ENCODE measurements at regions of chr3 and their contacts with region 1.

Region 1: GRCh38 chr3:185824476-185825378 is at the start of gene IGF2BP2:
- DNase-seq: peak; percentile 83 to 87 (median 84)
- ATAC-seq: peak; percentile 69
- H3K4me3 ChIP-seq: peak within 1 kb of the TSS; percentile 91
- H3K27ac ChIP-seq: peak within 1 kb of the TSS; percentile 93
- H3K4me1 ChIP-seq: peaks cover 9 to 21% of the 10 kb centered on the region in 2 experiments; a peak in 4 of 5 replicates
- H3K27me3 ChIP-seq: no peaks in the 10 kb centered on the region
- CTCF ChIP-seq: peak in 2 of 3 experiments; percentile 16 to 18; a peak in 2 of 6 replicates
- EP300 ChIP-seq: no peak
- POLR2A ChIP-seq: peak; percentile 71
- RAD21 ChIP-seq: peak in 1 of 2 experiments; percentile 15; a peak in 3 of 4 replicates
- polyA plus RNA-seq, gene IGF2BP2: 3.2 to 3.5 TPM

Region 2: GRCh38 chr3:185764163-185764979 is 60.4 kb before region 1 on chr3:
- CTCF ChIA-PET with region 1: no interaction called
- POLR2A ChIA-PET with region 1: no interaction called
- in situ Hi-C with region 1: no loop called
- intact Hi-C with region 1: loop called (anchors 5 kb)
- DNase-seq: no peak
- ATAC-seq: peak; percentile 23
- H3K4me3 ChIP-seq: no peak overlapping the region
- H3K27ac ChIP-seq: no peak overlapping the region
- H3K4me1 ChIP-seq: peaks cover 4 to 34% of the 10 kb centered on the region in 2 experiments; a peak in 4 of 5 replicates
- H3K27me3 ChIP-seq: no peaks in the 10 kb centered on the region; a peak in 1 of 5 replicates
- CTCF ChIP-seq: no peak
- EP300 ChIP-seq: no peak
- POLR2A ChIP-seq: no peak
- RAD21 ChIP-seq: no peak

Region 3: GRCh38 chr3:185807445-185808068 is 17.2 kb before region 1 on chr3:
- CTCF ChIA-PET with region 1: no interaction called
- POLR2A ChIA-PET with region 1: interaction called, 17 read pairs
- in situ Hi-C with region 1: no loop called
- intact Hi-C with region 1: no loop called
- DNase-seq: peak in 2 of 4 experiments; percentile 23 to 67
- ATAC-seq: peak; percentile 17
- H3K4me3 ChIP-seq: no peak overlapping the region
- H3K27ac ChIP-seq: no peak overlapping the region
- H3K4me1 ChIP-seq: peaks cover 0 to 19% of the 10 kb centered on the region in 2 experiments; a peak in 4 of 5 replicates
- H3K27me3 ChIP-seq: no peaks in the 10 kb centered on the region
- CTCF ChIP-seq: no peak
- EP300 ChIP-seq: no peak
- POLR2A ChIP-seq: no peak
- RAD21 ChIP-seq: no peak

Region 4: GRCh38 chr3:185813691-185814215 is 11.0 kb before region 1 on chr3:
- CTCF ChIA-PET with region 1: no interaction called
- POLR2A ChIA-PET with region 1: interaction called, 17 read pairs
- in situ Hi-C with region 1: no loop called
- intact Hi-C with region 1: loop called (anchors 1 kb)
- DNase-seq: peak in 2 of 4 experiments; percentile 48 to 76
- ATAC-seq: peak; percentile 48
- H3K4me3 ChIP-seq: no peak overlapping the region
- H3K27ac ChIP-seq: peak overlapping the region; percentile 80
- H3K4me1 ChIP-seq: peaks cover 9 to 46% of the 10 kb centered on the region in 2 experiments
- H3K27me3 ChIP-seq: no peaks in the 10 kb centered on the region
- CTCF ChIP-seq: no peak
- EP300 ChIP-seq: no peak; the same call in none of the 2 replicates
- POLR2A ChIP-seq: no peak; the same call in 1 of the 2 replicates
- RAD21 ChIP-seq: no peak

Region 5: GRCh38 chr3:185937689-185938463 is 113.1 kb after region 1 on chr3 and contains the start of gene TRA2B:
- CTCF ChIA-PET with region 1: no interaction called
- POLR2A ChIA-PET with region 1: interaction called, 6 read pairs
- in situ Hi-C with region 1: no loop called
- intact Hi-C with region 1: loop called (anchors 2 kb)
- DNase-seq: peak; percentile 95 to 99 (median 96)
- ATAC-seq: peak; percentile 87
- H3K4me3 ChIP-seq: peak within 1 kb of the TSS; percentile 99
- H3K27ac ChIP-seq: peak within 1 kb of the TSS; percentile 100
- H3K4me1 ChIP-seq: peaks cover 0 to 10% of the 10 kb centered on the region in 2 experiments; a peak in 2 of 5 replicates
- H3K27me3 ChIP-seq: no peaks in the 10 kb centered on the region
- CTCF ChIP-seq: peak; percentile 30 to 44 (median 43); a peak in 3 of 6 replicates
- EP300 ChIP-seq: peak; percentile 35
- POLR2A ChIP-seq: peak; percentile 100
- RAD21 ChIP-seq: no peak
- polyA plus RNA-seq, gene TRA2B: 105 to 132 TPM

Region 6: DNA sequence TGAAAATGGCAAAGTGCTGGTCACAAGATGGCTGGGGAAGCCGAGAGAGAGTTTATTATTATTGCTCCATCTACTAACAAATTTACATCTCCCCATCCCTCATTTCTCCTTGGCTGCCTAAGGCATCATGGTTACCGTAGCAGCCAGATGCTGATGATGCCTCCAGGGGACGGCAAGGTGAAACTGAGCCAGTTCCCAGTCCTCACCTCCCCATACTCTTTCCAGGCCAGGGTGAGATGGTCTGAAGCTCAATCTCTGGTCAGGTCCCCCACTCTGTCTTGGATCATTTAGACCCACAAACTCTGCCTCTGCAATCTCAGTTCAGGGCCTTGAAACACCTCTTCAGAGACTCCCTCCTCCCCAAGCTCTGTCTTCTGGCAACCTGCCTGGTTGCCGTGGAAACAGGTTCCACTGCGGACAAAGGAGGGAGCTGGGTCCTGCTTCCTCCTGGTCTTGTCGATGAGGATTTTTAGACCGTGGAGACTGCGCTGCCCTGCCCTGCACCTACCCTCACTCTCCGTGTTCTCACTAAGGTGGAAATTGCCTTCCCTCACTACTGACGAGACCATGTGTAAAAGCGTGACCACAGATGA is 1372.4 kb after region 1 on chr3 and contains the start of gene RTP1:
- CTCF ChIA-PET with region 1: no interaction called
- POLR2A ChIA-PET with region 1: no interaction called
- in situ Hi-C with region 1: no loop called
- intact Hi-C with region 1: no loop called
- DNase-seq: no peak
- ATAC-seq: no peak
- H3K4me3 ChIP-seq: no peak within 1 kb of the TSS
- H3K27ac ChIP-seq: no peak within 1 kb of the TSS
- H3K4me1 ChIP-seq: peaks cover 0 to 6% of the 10 kb centered on the region in 2 experiments; a peak in 1 of 5 replicates
- H3K27me3 ChIP-seq: peaks cover 17 to 51% of the 10 kb centered on the region in 2 experiments
- CTCF ChIP-seq: no peak
- EP300 ChIP-seq: no peak
- POLR2A ChIP-seq: no peak
- RAD21 ChIP-seq: no peak
- polyA plus RNA-seq, gene RTP1: not detected